SK-N-SH (cell line): ENCODE measurements at regions of chr11 and their contacts with region 1.

Region 1: GRCh38 chr11:74398244-74399159 is at the start of gene PGM2L1:
- DNase-seq: peak; percentile 93
- H3K4me3 ChIP-seq: peak within 1 kb of the TSS; percentile 80 to 99
- H3K27ac ChIP-seq: peak within 1 kb of the TSS; percentile 67 to 94
- H3K4me1 ChIP-seq: peaks cover 2 to 6% of the 10 kb centered on the region in 2 experiments; a peak in 3 of 4 replicates
- H3K27me3 ChIP-seq: no peaks in the 10 kb centered on the region
- CTCF ChIP-seq: no peak
- EP300 ChIP-seq: no peak
- RAD21 ChIP-seq: no peak
- polyA plus RNA-seq, gene PGM2L1: 0.90 and 1.0 TPM in 2 replicates

Region 2: DNA sequence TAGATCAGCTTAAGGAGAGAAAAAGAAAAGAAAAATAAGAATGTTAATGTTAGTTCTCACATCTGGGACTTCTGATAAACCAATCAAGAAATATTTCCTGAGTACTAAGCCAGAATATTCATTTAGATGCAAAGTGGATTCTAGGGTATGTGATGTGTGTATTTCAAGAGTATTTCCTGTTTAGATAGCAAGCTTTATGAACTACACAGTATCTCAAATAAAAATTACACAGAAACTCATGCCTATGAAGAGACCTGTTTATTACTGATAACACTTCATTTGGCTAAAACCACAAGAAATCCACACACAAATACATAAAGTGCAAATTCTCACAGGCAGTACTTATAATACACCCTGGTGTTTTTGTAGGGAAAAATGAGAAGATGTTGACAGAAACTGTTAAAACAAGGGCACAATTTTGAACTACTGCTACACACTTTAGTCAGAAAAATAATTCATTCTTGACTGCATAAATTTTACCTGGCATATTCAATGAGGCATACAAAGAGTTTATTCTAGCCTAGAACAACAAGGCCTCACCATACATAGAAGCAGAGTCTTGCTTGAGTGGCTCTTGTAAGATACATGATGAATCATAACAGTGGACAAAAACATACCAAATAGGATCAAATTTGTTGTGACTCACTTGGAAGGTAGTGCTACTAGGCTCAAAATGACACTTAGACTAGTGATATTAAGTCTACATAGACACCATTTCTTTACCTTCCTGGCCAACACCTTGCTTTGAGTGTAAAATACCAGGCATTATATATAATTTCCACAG is 68.2 kb before region 1 on chr11:
- CTCF ChIA-PET with region 1: no interaction called
- POLR2A ChIA-PET with region 1: no interaction called
- DNase-seq: no peak
- H3K4me3 ChIP-seq: no peak overlapping the region
- H3K27ac ChIP-seq: peak overlapping the region in 1 of 2 experiments; percentile 63; a peak in 2 of 4 replicates
- H3K4me1 ChIP-seq: peaks cover 9 to 31% of the 10 kb centered on the region in 2 experiments; a peak in 3 of 4 replicates
- H3K27me3 ChIP-seq: no peaks in the 10 kb centered on the region
- CTCF ChIP-seq: no peak
- EP300 ChIP-seq: no peak
- RAD21 ChIP-seq: no peak

Region 3: DNA sequence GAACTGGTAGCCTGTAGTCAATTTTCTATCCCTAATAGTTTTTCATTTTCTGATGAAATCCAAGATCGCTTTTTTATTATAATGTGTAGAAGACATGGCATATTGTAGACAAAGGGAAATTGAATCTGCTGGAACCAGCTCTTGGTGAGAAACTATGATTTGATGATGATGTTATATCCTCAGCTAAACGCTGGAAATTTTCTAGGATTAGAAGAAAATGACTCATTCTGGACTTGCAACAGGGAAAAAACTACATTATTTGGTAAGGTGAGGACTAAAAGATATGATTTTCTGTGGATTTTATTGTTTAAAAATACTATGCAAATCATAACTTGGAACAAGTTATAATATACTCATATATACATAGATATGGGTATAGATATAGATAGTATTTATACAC is 13.8 kb after region 1 on chr11:
- CTCF ChIA-PET with region 1: interaction called, 10 read pairs
- POLR2A ChIA-PET with region 1: interaction called, 6 read pairs
- DNase-seq: no peak
- H3K4me3 ChIP-seq: no peak overlapping the region
- H3K27ac ChIP-seq: no peak overlapping the region
- H3K4me1 ChIP-seq: peaks cover 0 to under 1% of the 10 kb centered on the region in 2 experiments; a peak in 1 of 4 replicates
- H3K27me3 ChIP-seq: no peaks in the 10 kb centered on the region
- CTCF ChIP-seq: no peak
- EP300 ChIP-seq: no peak
- RAD21 ChIP-seq: no peak